ENCODE measurements at regions of chr4 and their contacts with region 1.

Region 1: DNA sequence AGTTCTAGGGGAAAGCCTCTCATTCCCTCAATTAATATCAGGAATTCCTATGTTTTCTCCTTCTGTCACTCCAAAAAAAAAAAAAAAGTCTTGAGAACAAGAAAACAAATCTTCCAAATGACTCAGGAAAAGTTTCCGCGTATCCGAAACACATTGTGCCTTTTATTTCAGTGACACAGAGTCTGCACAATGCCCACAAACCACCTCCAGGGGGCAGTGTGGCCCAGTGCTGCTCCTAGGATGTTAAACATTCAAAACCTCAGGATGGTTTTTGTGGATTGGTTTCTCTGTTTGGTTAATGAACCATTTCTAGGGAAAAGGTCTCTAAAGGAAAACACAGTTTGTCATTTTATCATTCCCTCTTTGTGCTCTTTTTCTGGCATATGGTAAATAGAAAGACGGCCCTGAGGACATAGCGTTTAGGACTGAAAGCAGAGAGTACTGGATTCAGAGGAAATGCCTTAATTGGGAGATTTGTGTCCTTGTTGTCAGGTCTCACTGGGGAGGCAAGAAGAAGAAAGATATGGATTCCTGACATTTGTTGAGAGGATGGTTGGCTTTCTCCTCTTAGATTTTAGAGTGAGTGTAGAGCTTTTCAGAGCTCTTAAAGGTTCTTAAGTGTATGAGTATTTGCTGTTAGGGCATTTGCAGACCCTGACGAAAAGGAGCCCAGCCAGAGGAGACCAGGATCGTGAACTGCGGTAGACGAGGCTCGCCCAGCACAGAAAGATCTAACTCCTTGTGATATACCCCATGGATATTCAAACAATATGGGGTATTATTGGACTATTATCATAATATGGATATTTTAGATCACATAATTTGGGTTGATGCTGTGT is 65.7 kb upstream of the MAP9 start:
- DNase-seq: peak; percentile 35 to 92
- H3K4me3 ChIP-seq: peak overlapping the region in 1 of 2 donors; percentile 42
- H3K27ac ChIP-seq: peak overlapping the region in 1 of 2 donors; percentile 57
- H3K4me1 ChIP-seq: peaks cover 0 to 6% of the 10 kb centered on the region in 2 donors
- H3K27me3 ChIP-seq: no peaks in the 10 kb centered on the region
- CTCF ChIP-seq: peak; percentile 72 to 95 (median 87)

Region 2: GRCh38 chr4:155512817-155513216 is 70.3 kb after region 1 on chr4:
- intact Hi-C with region 1: loop called (anchors 5 kb)
- DNase-seq: no peak
- H3K4me3 ChIP-seq: no peak overlapping the region
- H3K27ac ChIP-seq: peak overlapping the region in 1 of 2 donors; percentile 26
- H3K4me1 ChIP-seq: peaks cover 0 to 12% of the 10 kb centered on the region in 2 donors
- H3K27me3 ChIP-seq: no peaks in the 10 kb centered on the region
- CTCF ChIP-seq: no peak

Region 3: GRCh38 chr4:155582971-155583437 is 140.5 kb after region 1 on chr4:
- intact Hi-C with region 1: no loop called
- DNase-seq: no peak
- H3K4me3 ChIP-seq: no peak overlapping the region
- H3K27ac ChIP-seq: no peak overlapping the region
- H3K4me1 ChIP-seq: peaks cover 0 to 7% of the 10 kb centered on the region in 2 donors
- H3K27me3 ChIP-seq: no peaks in the 10 kb centered on the region
- CTCF ChIP-seq: no peak

Region 4: GRCh38 chr4:155667568-155668511 is 225.4 kb after region 1 on chr4:
- intact Hi-C with region 1: loop called (anchors 2 kb)
- DNase-seq: peak in 1 of 2 donors; percentile 73
- H3K4me3 ChIP-seq: peak overlapping the region; percentile 58 to 85
- H3K27ac ChIP-seq: peak overlapping the region; percentile 90 to 97
- H3K4me1 ChIP-seq: peaks cover 0 to 16% of the 10 kb centered on the region in 2 donors
- H3K27me3 ChIP-seq: no peaks in the 10 kb centered on the region
- CTCF ChIP-seq: no peak

Measured in ascending aorta (tissue), 2 donors.